ENCODE measurements at regions of chr2 and their contacts with region 1.

Region 1: GRCh38 chr2:22124003-22124402 is 1000.2 kb downstream of the TDRD15 start:
- DNase-seq: no peak
- H3K4me3 ChIP-seq: no peak overlapping the region
- H3K27ac ChIP-seq: no peak overlapping the region
- H3K4me1 ChIP-seq: no peaks in the 10 kb centered on the region
- H3K27me3 ChIP-seq: no peaks in the 10 kb centered on the region
- CTCF ChIP-seq: 0 out of 2 replicates have a peak, but pooled peaks have one; percentile 16
- EP300 ChIP-seq: no peak
- RAD21 ChIP-seq: peak; percentile 2; the same call in 1 of the 2 replicates

Region 2: DNA sequence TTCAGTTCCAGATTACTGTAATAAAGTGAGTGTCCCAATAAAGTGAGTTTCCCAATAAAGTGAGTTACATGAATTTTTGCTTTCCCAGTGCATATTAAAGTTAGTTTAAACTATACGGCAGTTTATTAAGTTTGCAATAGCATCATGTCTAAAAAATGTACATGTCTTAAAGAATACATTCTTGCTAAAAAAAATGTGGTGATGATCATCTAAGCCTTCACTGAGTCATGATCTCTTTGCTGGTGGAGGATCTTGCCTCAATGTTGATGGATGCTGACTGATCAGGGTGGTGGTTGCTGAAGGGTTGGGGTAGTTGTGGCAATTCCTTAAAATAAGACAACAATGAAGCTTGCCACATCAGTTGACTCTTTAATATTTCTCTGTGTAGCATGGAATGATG is 336.1 kb before region 1 on chr2:
- CTCF ChIA-PET with region 1: no interaction called
- POLR2A ChIA-PET with region 1: no interaction called
- DNase-seq: no peak
- H3K4me3 ChIP-seq: no peak overlapping the region
- H3K27ac ChIP-seq: no peak overlapping the region
- H3K4me1 ChIP-seq: no peaks in the 10 kb centered on the region; a peak in 1 of 4 replicates
- H3K27me3 ChIP-seq: no peaks in the 10 kb centered on the region
- CTCF ChIP-seq: no peak
- EP300 ChIP-seq: no peak
- RAD21 ChIP-seq: no peak

Region 3: GRCh38 chr2:22110244-22110651 is 13.8 kb before region 1 on chr2:
- CTCF ChIA-PET with region 1: interaction called, 15 read pairs
- POLR2A ChIA-PET with region 1: no interaction called
- DNase-seq: peak; percentile 76
- H3K4me3 ChIP-seq: no peak overlapping the region
- H3K27ac ChIP-seq: peak overlapping the region in 1 of 2 experiments; percentile 85; a peak in 2 of 4 replicates
- H3K4me1 ChIP-seq: peaks cover 0 to 7% of the 10 kb centered on the region in 2 experiments; a peak in 2 of 4 replicates
- H3K27me3 ChIP-seq: no peaks in the 10 kb centered on the region
- CTCF ChIP-seq: no peak
- EP300 ChIP-seq: peak in 1 of 2 experiments; percentile 97; a peak in 2 of 4 replicates
- RAD21 ChIP-seq: peak; percentile 66